ENCODE measurements at regions of chr19 and their contacts with region 1.

Region 1: DNA sequence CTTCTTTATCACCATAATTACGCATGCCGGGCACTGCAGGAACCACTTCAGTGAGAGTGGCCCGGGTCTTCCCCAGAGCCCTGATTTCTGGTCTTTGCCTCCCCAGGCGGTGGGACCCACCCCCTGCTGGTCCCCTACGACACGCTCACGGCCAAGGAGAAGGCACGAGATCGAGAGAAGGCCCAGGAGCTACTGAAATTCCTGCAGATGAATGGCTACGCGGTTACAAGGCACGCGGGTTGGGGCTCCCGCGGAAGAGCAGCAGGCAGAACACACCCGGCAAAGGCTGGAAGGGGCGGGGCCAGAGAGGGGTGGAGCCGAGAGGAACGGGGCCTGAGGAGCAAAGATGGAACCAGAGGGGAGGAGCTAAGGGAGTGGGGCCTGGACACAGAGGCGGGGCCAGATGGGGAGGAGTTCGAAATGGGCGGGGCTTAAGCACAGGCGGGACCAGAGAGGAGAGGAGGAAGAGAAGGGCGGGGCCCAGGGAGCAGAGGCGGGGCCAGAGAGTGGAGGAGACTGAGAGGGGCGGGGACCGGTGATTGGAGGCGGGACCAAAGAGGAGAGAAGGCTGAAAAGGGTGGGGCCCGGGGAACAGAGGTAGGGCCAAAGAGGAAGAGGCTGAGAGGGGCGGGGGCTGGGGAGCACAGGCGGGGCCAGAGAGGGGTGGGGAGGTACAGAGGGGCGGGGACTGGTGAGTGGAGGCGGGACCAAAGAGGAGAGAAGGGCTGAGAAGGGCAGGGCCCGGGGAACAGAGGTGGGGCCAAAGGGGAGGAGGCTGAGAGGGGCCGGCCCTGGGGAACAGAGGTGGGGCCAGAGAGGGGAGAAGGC is 73.4 kb downstream of the RYR1 start:
- DNase-seq: peak; percentile 42 to 92
- ATAC-seq: peak; percentile 80 to 89 (median 88)
- H3K4me3 ChIP-seq: no peak overlapping the region
- H3K4me3 Mint-ChIP-seq: peak overlapping the region; percentile 42
- H3K27ac ChIP-seq: no peak overlapping the region
- H3K27ac Mint-ChIP-seq: no peak overlapping the region
- H3K4me1 ChIP-seq: peaks cover 14% of the 10 kb centered on the region
- H3K4me1 Mint-ChIP-seq: peaks cover 0 to 7% of the 10 kb centered on the region in 2 donors
- H3K27me3 ChIP-seq: no peaks in the 10 kb centered on the region
- H3K27me3 Mint-ChIP-seq: peaks cover 0 to 4% of the 10 kb centered on the region in 2 donors
- CTCF ChIP-seq: no peak

Region 2: DNA sequence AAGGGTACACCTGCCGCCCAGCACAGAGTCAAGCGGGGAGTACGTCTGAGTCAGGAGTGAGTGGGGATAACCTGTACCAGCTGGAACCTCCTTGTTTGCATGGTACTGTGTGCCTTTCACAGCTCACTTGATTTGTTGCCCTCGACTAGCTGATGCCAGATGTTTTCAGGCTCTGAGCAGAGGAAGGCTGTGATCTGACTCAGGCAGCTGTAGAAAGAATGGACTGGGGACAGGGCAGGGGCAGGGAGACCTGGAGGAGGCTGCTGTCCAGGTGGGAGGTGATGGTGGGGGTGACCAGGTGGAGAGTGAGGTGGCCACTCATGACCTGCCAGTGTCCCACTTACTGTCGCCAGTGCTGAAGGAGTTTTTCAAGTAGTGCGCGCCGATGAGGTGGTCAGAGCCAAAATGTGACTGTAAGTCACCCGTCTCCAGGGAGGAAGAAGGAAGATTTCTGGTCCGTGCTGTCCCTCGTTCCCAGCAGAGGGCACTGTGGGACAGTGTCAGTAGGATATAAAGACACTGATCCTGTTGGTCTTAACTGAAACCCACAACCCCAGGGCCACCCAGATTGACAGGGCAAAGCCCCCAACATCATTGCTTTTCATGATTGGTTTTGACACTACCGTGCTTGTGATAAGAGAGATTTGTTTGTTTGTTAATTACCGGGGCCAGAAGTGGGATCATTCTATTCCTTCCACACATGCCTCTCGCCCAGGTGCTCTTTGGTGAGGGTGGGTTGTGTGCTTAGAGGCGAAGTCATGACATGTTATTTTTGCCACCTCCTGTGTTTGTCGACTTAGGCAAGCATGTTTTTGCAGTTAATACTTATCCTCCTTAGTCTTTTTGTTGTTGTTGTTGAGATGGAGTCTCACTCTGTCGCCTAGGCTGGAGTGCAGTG is 411.3 kb before region 1 on chr19:
- intact Hi-C with region 1: no loop called
- DNase-seq: peak; percentile 26 to 68
- ATAC-seq: peak; percentile 70 to 74 (median 70)
- H3K4me3 ChIP-seq: no peak overlapping the region
- H3K4me3 Mint-ChIP-seq: no peak overlapping the region
- H3K27ac ChIP-seq: no peak overlapping the region
- H3K27ac Mint-ChIP-seq: peak overlapping the region in 1 of 2 donors; percentile 62
- H3K4me1 ChIP-seq: no peaks in the 10 kb centered on the region
- H3K4me1 Mint-ChIP-seq: peaks cover 5 to 9% of the 10 kb centered on the region in 2 donors
- H3K27me3 ChIP-seq: no peaks in the 10 kb centered on the region
- H3K27me3 Mint-ChIP-seq: no peaks in the 10 kb centered on the region
- CTCF ChIP-seq: peak; percentile 43

Region 3: DNA sequence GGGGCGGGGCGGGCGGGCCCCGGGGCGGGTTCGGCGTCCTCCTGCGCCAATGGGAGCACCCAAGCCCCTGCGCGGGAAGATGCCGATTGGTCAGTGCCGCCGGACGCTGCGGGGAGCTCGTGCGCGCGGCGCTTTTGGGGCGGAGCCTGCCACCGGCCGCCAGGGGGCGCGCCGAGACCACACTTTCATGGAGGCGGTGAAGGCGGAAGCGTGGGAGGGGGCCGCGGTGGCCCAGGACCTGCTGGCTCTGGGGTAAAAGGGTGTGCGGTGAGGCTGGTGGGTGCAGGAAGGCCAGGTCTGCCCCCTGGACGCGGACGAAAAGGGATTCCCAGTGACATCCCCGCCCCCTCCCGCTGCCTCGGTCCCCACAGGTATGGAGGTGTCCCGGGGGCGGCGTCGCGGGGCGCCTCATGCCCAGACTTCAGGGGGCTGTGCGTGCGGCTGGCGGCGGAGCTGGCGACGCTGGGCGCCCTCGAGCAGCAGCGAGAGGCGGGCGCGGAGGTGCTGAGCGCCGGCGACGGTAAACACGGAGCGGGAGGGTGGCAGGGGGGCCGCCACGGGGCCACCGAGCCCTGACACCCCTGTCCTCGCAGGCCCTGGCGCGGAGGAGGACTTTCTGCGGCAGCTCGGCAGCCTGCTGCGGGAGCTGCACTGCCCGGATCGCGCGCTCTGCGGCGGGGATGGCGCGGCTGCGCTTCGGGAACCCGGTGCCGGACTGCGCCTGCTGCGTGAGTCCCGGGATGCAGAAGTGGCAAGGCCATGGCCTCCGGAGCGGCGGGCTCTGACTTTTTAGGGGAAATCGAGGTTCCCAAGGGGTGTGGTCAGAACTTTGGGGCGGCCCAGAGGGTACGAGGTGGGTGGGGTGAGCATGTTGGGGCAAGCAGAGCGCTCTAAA is 103.7 kb before region 1 on chr19 and contains the start of gene FAM98C:
- intact Hi-C with region 1: loop called (anchors 5 kb)
- DNase-seq: peak; percentile 99
- ATAC-seq: peak; percentile 95 to 99 (median 96)
- H3K4me3 ChIP-seq: peak within 1 kb of the TSS; percentile 93
- H3K4me3 Mint-ChIP-seq: peak within 1 kb of the TSS; percentile 97
- H3K27ac ChIP-seq: peak within 1 kb of the TSS; percentile 84
- H3K27ac Mint-ChIP-seq: peak within 1 kb of the TSS; percentile 86 to 95
- H3K4me1 ChIP-seq: peaks cover 16% of the 10 kb centered on the region
- H3K4me1 Mint-ChIP-seq: peaks cover 10 to 19% of the 10 kb centered on the region in 2 donors
- H3K27me3 ChIP-seq: peaks cover 3% of the 10 kb centered on the region
- H3K27me3 Mint-ChIP-seq: peaks cover 12 to 16% of the 10 kb centered on the region in 2 donors
- CTCF ChIP-seq: peak; percentile 100
- total RNA-seq, gene FAM98C: 36.9 to 42.1 (median 41.6) TPM

Region 4: GRCh38 chr19:38492181-38492813 is 14.6 kb before region 1 on chr19:
- intact Hi-C with region 1: no loop called
- DNase-seq: no peak
- ATAC-seq: no peak
- H3K4me3 ChIP-seq: no peak overlapping the region
- H3K4me3 Mint-ChIP-seq: no peak overlapping the region
- H3K27ac ChIP-seq: no peak overlapping the region
- H3K27ac Mint-ChIP-seq: no peak overlapping the region
- H3K4me1 ChIP-seq: peaks cover 3% of the 10 kb centered on the region
- H3K4me1 Mint-ChIP-seq: no peaks in the 10 kb centered on the region
- H3K27me3 ChIP-seq: no peaks in the 10 kb centered on the region
- H3K27me3 Mint-ChIP-seq: peaks cover 8 to 20% of the 10 kb centered on the region in 2 donors
- CTCF ChIP-seq: no peak

Measured in natural killer cell (primary cell).